Sciatic nerve (tissue), 2 donors: ENCODE measurements at regions of chr13 and their contacts with region 1.

Region 1: DNA sequence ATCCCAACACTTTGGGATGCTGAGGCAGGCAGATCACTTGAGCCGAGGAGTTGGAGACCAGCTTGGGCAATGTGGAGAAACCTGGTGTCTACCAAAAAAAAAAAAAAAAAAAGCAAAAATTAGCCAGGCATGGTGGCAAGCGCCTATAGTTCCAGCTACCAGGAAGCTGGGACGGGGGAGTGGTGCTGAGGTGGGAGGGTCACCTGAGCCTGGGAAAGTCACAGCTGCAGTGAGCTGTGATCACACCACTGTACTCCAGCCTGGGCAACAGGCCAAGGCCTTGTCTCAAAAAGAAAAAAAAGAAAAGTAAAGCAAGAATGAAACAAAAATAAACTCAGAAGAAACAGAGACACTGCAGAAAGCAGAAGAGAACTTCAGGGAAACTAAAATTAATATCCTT is 31.6 kb downstream of the MTRF1 start:
- DNase-seq: no peak
- ATAC-seq: no peak

Region 2: DNA sequence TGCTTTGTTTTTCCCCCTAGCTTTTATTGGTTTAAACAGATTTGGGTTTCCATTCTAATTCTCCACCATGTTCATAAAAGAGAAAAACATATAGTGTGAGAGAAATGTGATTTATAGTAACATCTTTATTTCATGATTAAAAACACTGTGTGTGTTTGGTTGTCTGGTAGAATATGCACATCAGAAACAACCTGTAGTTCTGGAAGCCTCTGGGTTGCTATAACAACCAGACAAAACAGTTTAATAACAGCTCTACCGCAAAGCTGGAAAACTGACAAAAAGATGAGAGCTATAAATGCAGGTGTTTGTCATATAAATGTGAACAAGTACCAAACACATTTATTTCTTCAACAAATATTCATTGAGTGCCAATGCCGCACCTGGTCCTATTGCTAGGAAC is 108.9 kb before region 1 on chr13:
- intact Hi-C with region 1: no loop called
- DNase-seq: no peak
- ATAC-seq: no peak

Region 3: GRCh38 chr13:41306271-41307145 is 74.7 kb after region 1 on chr13:
- intact Hi-C with region 1: no loop called
- DNase-seq: no peak
- ATAC-seq: no peak

Region 4: GRCh38 chr13:41596190-41596589 is 364.4 kb after region 1 on chr13:
- intact Hi-C with region 1: loop called (anchors 5 kb)
- DNase-seq: no peak
- ATAC-seq: no peak